CD8-positive, alpha-beta T cell (primary cell): ENCODE measurements at regions of chr16 and their contacts with region 1.

Region 1: GRCh38 chr16:68237243-68238028 is 1.5 kb upstream of the ESRP2 start:
- DNase-seq: peak; percentile 61 to 92 (median 86)
- ATAC-seq: peak; percentile 80
- H3K4me3 ChIP-seq: peak overlapping the region; percentile 67 to 93
- H3K4me3 Mint-ChIP-seq: peak overlapping the region; percentile 95
- H3K27ac ChIP-seq: peak overlapping the region; percentile 35 to 51
- H3K27ac Mint-ChIP-seq: peak overlapping the region; percentile 86
- H3K4me1 ChIP-seq: peaks cover 32% of the 10 kb centered on the region
- H3K4me1 Mint-ChIP-seq: peaks cover 32% of the 10 kb centered on the region
- H3K27me3 ChIP-seq: no peaks in the 10 kb centered on the region
- H3K27me3 Mint-ChIP-seq: no peaks in the 10 kb centered on the region
- CTCF ChIP-seq: no peak

Region 2: DNA sequence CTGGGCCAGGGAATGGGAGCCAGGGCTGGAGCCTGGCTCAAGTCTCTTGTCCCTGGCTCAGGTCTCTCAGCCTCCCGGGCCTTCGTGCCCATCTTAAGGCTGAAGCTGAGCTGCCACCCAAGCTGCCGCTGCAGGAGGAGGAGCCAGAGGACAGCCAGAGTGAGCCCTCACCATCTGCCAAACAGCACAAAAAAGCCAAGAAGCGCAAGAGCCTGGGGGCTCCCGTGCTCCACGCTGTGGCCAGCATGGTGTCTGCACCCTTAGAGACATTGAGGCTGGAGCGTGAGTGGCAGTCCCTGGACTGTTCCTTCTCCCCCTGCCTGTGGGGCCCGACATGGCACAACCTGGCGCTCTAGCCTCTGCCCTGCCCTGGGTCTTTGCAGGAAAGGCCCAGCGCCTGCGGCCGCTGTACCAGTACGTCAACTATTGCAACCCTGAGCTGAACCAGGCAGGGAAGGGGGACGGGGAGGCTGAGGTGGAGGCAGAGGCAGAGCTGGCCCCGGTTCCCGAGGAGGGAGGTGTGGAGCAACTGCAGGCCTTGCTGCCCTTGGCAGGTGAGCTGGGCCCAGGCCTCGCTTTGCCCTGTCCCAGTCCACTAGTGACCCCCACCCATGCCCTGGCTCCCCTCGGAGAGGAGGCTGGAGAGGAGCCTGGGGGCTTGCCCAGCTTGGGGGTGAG is 569.5 kb before region 1 on chr16:
- CTCF ChIA-PET with region 1: no interaction called
- POLR2A ChIA-PET with region 1: no interaction called
- intact Hi-C with region 1: loop called in 1 of 2 experiments (anchors 10 kb)
- DNase-seq: peak; percentile 64 to 91 (median 78)
- ATAC-seq: peak; percentile 90
- H3K4me3 ChIP-seq: peak overlapping the region in 1 of 2 experiments; percentile 84
- H3K4me3 Mint-ChIP-seq: peak overlapping the region; percentile 82
- H3K27ac ChIP-seq: peak overlapping the region in 1 of 2 experiments; percentile 38
- H3K27ac Mint-ChIP-seq: no peak overlapping the region
- H3K4me1 ChIP-seq: peaks cover 17% of the 10 kb centered on the region
- H3K4me1 Mint-ChIP-seq: peaks cover 16% of the 10 kb centered on the region
- H3K27me3 ChIP-seq: no peaks in the 10 kb centered on the region
- H3K27me3 Mint-ChIP-seq: no peaks in the 10 kb centered on the region
- CTCF ChIP-seq: peak; percentile 65

Region 3: DNA sequence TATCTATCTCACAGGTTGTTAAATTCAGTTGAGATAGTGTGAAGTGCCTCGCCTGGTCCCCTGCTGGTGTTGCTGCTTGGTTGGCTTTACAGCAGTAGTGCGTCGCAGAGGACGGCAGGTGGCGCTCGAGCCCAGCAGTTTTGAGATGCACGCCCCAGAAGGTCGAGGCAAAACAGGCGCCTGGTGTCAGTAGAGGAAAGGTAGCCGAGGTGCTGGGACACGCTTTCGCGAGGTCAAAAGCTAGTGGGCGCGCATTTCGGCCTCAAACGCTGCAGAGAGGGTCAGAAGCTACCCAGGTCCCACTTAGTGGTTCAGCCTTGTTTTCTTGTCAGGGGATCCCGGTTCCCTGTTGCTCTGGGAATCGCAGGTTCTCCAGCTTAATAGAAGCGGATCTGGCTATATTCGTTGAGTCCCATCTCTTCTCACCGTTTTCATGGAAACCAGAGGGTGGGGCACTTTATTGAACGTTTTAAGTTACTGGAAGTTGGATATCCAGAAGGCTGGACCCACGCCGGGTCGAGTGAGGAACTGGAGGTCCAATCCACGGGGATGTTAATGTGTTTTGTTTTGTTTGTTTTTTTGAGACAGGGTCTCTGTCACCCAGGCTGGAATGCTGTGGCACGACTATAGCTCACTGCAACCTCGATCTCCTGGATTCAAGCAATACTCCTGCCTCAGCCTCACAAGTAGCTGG is 291.4 kb after region 1 on chr16:
- CTCF ChIA-PET with region 1: no interaction called
- POLR2A ChIA-PET with region 1: no interaction called
- intact Hi-C with region 1: no loop called
- DNase-seq: peak; percentile 84 to 93 (median 90)
- ATAC-seq: peak; percentile 80
- H3K4me3 ChIP-seq: no peak overlapping the region
- H3K4me3 Mint-ChIP-seq: peak overlapping the region; percentile 72
- H3K27ac ChIP-seq: no peak overlapping the region
- H3K27ac Mint-ChIP-seq: peak overlapping the region; percentile 28
- H3K4me1 ChIP-seq: peaks cover 21% of the 10 kb centered on the region
- H3K4me1 Mint-ChIP-seq: peaks cover 23% of the 10 kb centered on the region
- H3K27me3 ChIP-seq: no peaks in the 10 kb centered on the region
- H3K27me3 Mint-ChIP-seq: no peaks in the 10 kb centered on the region
- CTCF ChIP-seq: peak; percentile 94

Region 4: DNA sequence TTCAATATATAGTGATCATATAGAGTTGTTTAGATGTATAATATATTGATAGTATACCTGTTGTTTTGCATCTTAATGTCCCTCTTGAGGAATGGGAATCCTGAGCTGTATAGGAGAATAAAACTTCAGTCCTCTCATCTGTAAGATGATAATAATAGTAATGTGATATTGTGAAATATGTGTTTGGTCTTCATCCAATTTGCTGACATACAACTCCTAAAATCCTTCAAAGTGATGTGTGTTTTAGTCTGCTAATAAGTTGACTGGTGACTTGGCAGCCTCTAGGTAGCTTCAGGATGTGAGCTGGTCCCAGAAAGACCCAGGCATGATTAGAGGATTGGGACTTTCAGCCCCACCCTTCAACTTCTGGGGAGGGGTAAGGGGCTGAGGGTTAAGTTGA is 1305.5 kb after region 1 on chr16:
- CTCF ChIA-PET with region 1: no interaction called
- POLR2A ChIA-PET with region 1: no interaction called
- intact Hi-C with region 1: no loop called
- DNase-seq: no peak
- ATAC-seq: no peak
- H3K4me3 ChIP-seq: no peak overlapping the region
- H3K4me3 Mint-ChIP-seq: no peak overlapping the region
- H3K27ac ChIP-seq: no peak overlapping the region
- H3K27ac Mint-ChIP-seq: no peak overlapping the region
- H3K4me1 ChIP-seq: no peaks in the 10 kb centered on the region
- H3K4me1 Mint-ChIP-seq: no peaks in the 10 kb centered on the region
- H3K27me3 ChIP-seq: no peaks in the 10 kb centered on the region
- H3K27me3 Mint-ChIP-seq: no peaks in the 10 kb centered on the region
- CTCF ChIP-seq: no peak